B cell (primary cell): ENCODE measurements at regions of chr10 and their contacts with region 1.

Region 1: GRCh38 chr10:23438550-23439441 is at the start of gene OTUD1:
- DNase-seq: peak; percentile 98
- ATAC-seq: peak; percentile 80
- H3K4me3 ChIP-seq: peak within 1 kb of the TSS; percentile 70 to 93 (median 87)
- H3K4me3 Mint-ChIP-seq: peak within 1 kb of the TSS; percentile 98
- H3K27ac ChIP-seq: peak within 1 kb of the TSS; percentile 83 to 92
- H3K27ac Mint-ChIP-seq: peak within 1 kb of the TSS; percentile 96
- H3K4me1 ChIP-seq: peaks cover 30 to 40% of the 10 kb centered on the region in 2 donors
- H3K4me1 Mint-ChIP-seq: peaks cover 49% of the 10 kb centered on the region
- H3K27me3 ChIP-seq: no peaks in the 10 kb centered on the region
- H3K27me3 Mint-ChIP-seq: no peaks in the 10 kb centered on the region
- CTCF ChIP-seq: no peak
- total RNA-seq, gene OTUD1: 66.3 and 69.0 TPM in 2 replicates

Region 2: GRCh38 chr10:22251751-22252223 is 1187.0 kb before region 1 on chr10:
- CTCF ChIA-PET with region 1: no interaction called
- POLR2A ChIA-PET with region 1: no interaction called
- intact Hi-C with region 1: loop called (anchors 10 kb)
- DNase-seq: peak; percentile 90
- ATAC-seq: peak; percentile 56
- H3K4me3 ChIP-seq: peak overlapping the region; percentile 77 to 95 (median 86)
- H3K4me3 Mint-ChIP-seq: peak overlapping the region; percentile 97
- H3K27ac ChIP-seq: peak overlapping the region; percentile 95 to 97
- H3K27ac Mint-ChIP-seq: peak overlapping the region; percentile 100
- H3K4me1 ChIP-seq: peaks cover 9 to 15% of the 10 kb centered on the region in 2 donors
- H3K4me1 Mint-ChIP-seq: peaks cover 26% of the 10 kb centered on the region
- H3K27me3 ChIP-seq: no peaks in the 10 kb centered on the region
- H3K27me3 Mint-ChIP-seq: no peaks in the 10 kb centered on the region
- CTCF ChIP-seq: no peak

Region 3: GRCh38 chr10:22723343-22723779 is 715.4 kb before region 1 on chr10:
- CTCF ChIA-PET with region 1: no interaction called
- POLR2A ChIA-PET with region 1: no interaction called
- intact Hi-C with region 1: loop called (anchors 10 kb)
- DNase-seq: peak; percentile 86
- ATAC-seq: peak; percentile 93
- H3K4me3 ChIP-seq: peak overlapping the region in 3 of 5 experiments; percentile 21 to 50 (median 29)
- H3K4me3 Mint-ChIP-seq: peak overlapping the region; percentile 88
- H3K27ac ChIP-seq: no peak overlapping the region
- H3K27ac Mint-ChIP-seq: peak overlapping the region; percentile 85
- H3K4me1 ChIP-seq: peaks cover 31 to 38% of the 10 kb centered on the region in 2 donors
- H3K4me1 Mint-ChIP-seq: peaks cover 58% of the 10 kb centered on the region
- H3K27me3 ChIP-seq: no peaks in the 10 kb centered on the region
- H3K27me3 Mint-ChIP-seq: no peaks in the 10 kb centered on the region
- CTCF ChIP-seq: no peak

Region 4: GRCh38 chr10:23448802-23449570 is 10.2 kb after region 1 on chr10:
- CTCF ChIA-PET with region 1: interaction called, 5 read pairs
- POLR2A ChIA-PET with region 1: interaction called, 24 read pairs
- intact Hi-C with region 1: loop called (anchors 1 kb)
- DNase-seq: peak; percentile 87
- ATAC-seq: peak; percentile 85
- H3K4me3 ChIP-seq: peak overlapping the region in 1 of 5 experiments; percentile 27
- H3K4me3 Mint-ChIP-seq: peak overlapping the region; percentile 84
- H3K27ac ChIP-seq: peak overlapping the region; percentile 74 to 91
- H3K27ac Mint-ChIP-seq: peak overlapping the region; percentile 95
- H3K4me1 ChIP-seq: peaks cover 64 to 74% of the 10 kb centered on the region in 2 donors
- H3K4me1 Mint-ChIP-seq: peaks cover 67% of the 10 kb centered on the region
- H3K27me3 ChIP-seq: no peaks in the 10 kb centered on the region
- H3K27me3 Mint-ChIP-seq: no peaks in the 10 kb centered on the region
- CTCF ChIP-seq: no peak

Region 5: DNA sequence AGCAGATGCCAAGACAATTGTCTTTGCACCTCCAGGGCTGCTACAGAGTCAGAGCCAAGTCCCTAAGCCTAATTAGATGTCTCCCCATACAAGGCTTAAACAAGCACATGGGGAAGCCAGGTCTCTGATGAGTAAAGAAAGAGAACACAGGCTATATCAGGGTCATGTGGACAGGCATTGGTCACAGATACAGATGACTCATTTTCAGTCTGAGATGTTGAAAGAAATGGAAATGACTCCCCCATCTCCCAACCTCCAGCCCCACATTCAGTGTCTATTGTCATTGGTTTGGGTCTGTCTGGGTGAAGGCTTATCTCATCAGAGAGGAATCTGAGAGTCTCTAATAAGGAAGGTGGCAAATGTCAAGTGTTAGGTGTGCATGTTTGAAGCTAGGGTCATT is 480.0 kb after region 1 on chr10:
- CTCF ChIA-PET with region 1: no interaction called
- POLR2A ChIA-PET with region 1: no interaction called
- intact Hi-C with region 1: no loop called
- DNase-seq: no peak
- ATAC-seq: no peak
- H3K4me3 ChIP-seq: no peak overlapping the region
- H3K4me3 Mint-ChIP-seq: no peak overlapping the region
- H3K27ac ChIP-seq: no peak overlapping the region
- H3K27ac Mint-ChIP-seq: no peak overlapping the region
- H3K4me1 ChIP-seq: no peaks in the 10 kb centered on the region
- H3K4me1 Mint-ChIP-seq: no peaks in the 10 kb centered on the region
- H3K27me3 ChIP-seq: no peaks in the 10 kb centered on the region
- H3K27me3 Mint-ChIP-seq: peaks cover 2% of the 10 kb centered on the region
- CTCF ChIP-seq: no peak

Region 6: DNA sequence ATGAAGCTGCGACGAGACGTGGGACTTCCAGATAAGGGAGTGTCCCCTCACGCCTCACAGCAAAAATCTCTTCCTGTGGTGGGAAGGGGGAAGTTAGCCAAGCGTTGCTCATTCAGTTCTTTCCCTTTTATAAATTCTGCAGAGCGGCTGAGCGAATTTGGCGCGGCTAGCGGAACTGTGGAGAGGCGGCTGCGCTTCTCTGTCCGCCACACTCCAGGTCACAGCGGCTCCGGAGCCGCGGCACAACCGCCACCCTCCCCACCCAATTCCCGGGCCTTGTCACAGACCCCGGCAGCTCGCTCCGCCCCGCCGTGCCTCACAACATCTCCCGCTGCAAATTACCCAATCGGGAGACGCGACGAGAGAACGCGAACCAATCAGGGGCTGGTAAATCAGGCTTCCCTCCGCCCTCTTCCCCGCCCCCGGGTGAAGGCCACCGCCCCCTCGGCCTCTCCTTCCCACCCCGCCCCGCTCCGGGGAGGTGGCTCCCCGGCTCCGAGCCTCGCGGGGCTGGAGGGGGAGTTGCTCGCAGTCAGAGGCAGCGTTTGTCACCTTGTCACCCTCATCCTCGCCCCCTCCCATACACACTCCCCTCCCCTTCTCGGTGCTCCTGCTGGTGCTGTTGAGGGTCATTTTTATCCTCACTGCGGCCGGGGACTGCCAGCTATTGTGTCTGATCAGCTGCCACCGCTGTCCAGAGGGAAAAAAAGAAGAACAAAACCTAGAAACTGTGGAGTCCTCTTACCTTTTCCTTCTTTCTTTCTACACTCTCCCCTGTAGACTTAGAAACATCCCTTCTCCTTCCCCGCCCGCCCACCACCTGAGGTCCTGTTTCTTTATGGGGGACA is 1285.8 kb after region 1 on chr10:
- CTCF ChIA-PET with region 1: no interaction called
- POLR2A ChIA-PET with region 1: no interaction called
- intact Hi-C with region 1: loop called (anchors 10 kb)
- DNase-seq: peak; percentile 94
- ATAC-seq: peak; percentile 84
- H3K4me3 ChIP-seq: peak overlapping the region; percentile 54 to 90 (median 86)
- H3K4me3 Mint-ChIP-seq: peak overlapping the region; percentile 96
- H3K27ac ChIP-seq: peak overlapping the region; percentile 54
- H3K27ac Mint-ChIP-seq: peak overlapping the region; percentile 94
- H3K4me1 ChIP-seq: peaks cover 18 to 27% of the 10 kb centered on the region in 2 donors
- H3K4me1 Mint-ChIP-seq: peaks cover 27% of the 10 kb centered on the region
- H3K27me3 ChIP-seq: peaks cover 0 to 10% (median 0%) of the 10 kb centered on the region in 4 experiments
- H3K27me3 Mint-ChIP-seq: no peaks in the 10 kb centered on the region
- CTCF ChIP-seq: no peak